ENCODE measurements at regions of chr5 and their contacts with region 1.

Region 1: GRCh38 chr5:72847989-72848473 is 31.6 kb downstream of the TNPO1 start:
- DNase-seq: peak; percentile 92 to 99 (median 96)

Region 2: DNA sequence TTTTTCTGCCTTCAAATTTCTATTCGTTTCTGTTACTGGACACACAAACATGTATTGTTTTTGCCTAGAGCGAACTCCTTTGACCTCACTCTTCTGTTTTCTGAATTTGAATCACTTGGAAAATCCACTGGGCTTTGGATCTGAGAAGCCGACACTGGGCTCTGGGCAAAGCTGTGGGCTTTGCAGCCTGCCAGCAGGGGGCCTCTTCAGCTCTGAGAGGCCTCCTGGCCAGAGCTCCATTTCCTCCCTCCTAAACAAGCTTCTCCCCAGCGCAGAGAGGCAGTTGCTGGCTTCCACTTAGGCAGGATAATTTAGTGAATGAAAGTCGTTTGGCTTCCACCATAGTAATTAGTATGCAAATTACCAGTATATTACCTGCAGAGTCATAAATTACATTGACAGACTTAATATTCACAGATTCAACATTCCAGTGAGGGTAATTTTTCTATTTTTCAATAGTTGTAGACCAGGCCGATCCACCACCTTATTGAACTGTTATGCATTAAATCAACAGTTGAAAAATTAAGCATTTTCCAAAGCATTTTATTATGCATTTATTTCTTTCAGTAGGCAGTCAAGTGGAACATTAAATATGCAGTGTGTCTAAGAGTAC is 236.8 kb before region 1 on chr5:
- intact Hi-C with region 1: loop called (anchors 10 kb)
- DNase-seq: peak; percentile 72 to 98 (median 82)

Measured in posterior cingulate gyrus (tissue), 11 donors.